CD4-positive, alpha-beta T cell (primary cell): ENCODE measurements at regions of chr16 and their contacts with region 1.

Region 1: GRCh38 chr16:2919511-2920255 is 8.0 kb downstream of the FLYWCH1 start:
- DNase-seq: peak; percentile 39 to 86 (median 54)
- ATAC-seq: peak; percentile 81
- H3K4me3 ChIP-seq: no peak overlapping the region
- H3K4me3 Mint-ChIP-seq: no peak overlapping the region
- H3K27ac ChIP-seq: no peak overlapping the region
- H3K27ac Mint-ChIP-seq: peak overlapping the region; percentile 16
- H3K4me1 ChIP-seq: peaks cover 3% of the 10 kb centered on the region
- H3K4me1 Mint-ChIP-seq: peaks cover 6% of the 10 kb centered on the region
- H3K27me3 ChIP-seq: no peaks in the 10 kb centered on the region
- H3K27me3 Mint-ChIP-seq: no peaks in the 10 kb centered on the region
- CTCF ChIP-seq: peak; percentile 95

Region 2: DNA sequence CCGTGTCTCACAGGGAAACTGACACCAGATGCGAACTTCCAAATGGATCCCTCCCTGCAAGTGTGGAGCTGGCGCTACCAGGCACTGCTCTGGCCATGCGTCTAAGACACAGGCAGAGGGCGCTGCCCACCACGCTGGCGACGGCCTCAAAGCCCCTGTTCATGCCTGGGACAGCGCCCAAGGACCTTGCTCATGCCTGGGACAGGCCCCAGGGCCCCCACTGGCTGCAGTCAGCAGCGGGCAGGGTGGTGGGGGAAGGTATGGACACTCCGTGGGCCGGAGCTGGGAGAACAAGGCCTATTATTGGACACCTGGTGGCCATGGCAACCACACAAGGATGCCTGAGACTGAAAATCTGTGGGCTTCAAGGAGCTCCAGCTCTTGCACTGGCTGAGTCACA is 80.8 kb before region 1 on chr16:
- CTCF ChIA-PET with region 1: interaction called, 3 read pairs
- POLR2A ChIA-PET with region 1: no interaction called
- intact Hi-C with region 1: loop called in 1 of 2 experiments (anchors 1 kb)
- DNase-seq: peak in 12 of 14 experiments; percentile 28 to 81 (median 52)
- ATAC-seq: peak; percentile 72
- H3K4me3 ChIP-seq: no peak overlapping the region
- H3K4me3 Mint-ChIP-seq: no peak overlapping the region
- H3K27ac ChIP-seq: no peak overlapping the region
- H3K27ac Mint-ChIP-seq: peak overlapping the region; percentile 33
- H3K4me1 ChIP-seq: peaks cover 46% of the 10 kb centered on the region
- H3K4me1 Mint-ChIP-seq: peaks cover 32% of the 10 kb centered on the region
- H3K27me3 ChIP-seq: no peaks in the 10 kb centered on the region
- H3K27me3 Mint-ChIP-seq: peaks cover 8% of the 10 kb centered on the region
- CTCF ChIP-seq: peak; percentile 51

Region 3: GRCh38 chr16:2874912-2875362 is 44.7 kb before region 1 on chr16:
- CTCF ChIA-PET with region 1: interaction called, 6 read pairs
- POLR2A ChIA-PET with region 1: no interaction called
- intact Hi-C with region 1: loop called (anchors 1 to 5 kb)
- DNase-seq: peak; percentile 40 to 90 (median 56)
- ATAC-seq: peak; percentile 100
- H3K4me3 ChIP-seq: no peak overlapping the region
- H3K4me3 Mint-ChIP-seq: no peak overlapping the region
- H3K27ac ChIP-seq: no peak overlapping the region
- H3K27ac Mint-ChIP-seq: no peak overlapping the region
- H3K4me1 ChIP-seq: peaks cover 9% of the 10 kb centered on the region
- H3K4me1 Mint-ChIP-seq: no peaks in the 10 kb centered on the region
- H3K27me3 ChIP-seq: no peaks in the 10 kb centered on the region
- H3K27me3 Mint-ChIP-seq: no peaks in the 10 kb centered on the region
- CTCF ChIP-seq: peak; percentile 95

Region 4: GRCh38 chr16:2883027-2883851 is 36.4 kb before region 1 on chr16 and contains the start of gene FLYWCH2:
- CTCF ChIA-PET with region 1: interaction called, 3 read pairs
- POLR2A ChIA-PET with region 1: interaction called, 4 read pairs
- intact Hi-C with region 1: loop called in 1 of 2 experiments (anchors 5 kb)
- DNase-seq: peak; percentile 98 to 100 (median 99)
- ATAC-seq: peak; percentile 77
- H3K4me3 ChIP-seq: peak within 1 kb of the TSS; percentile 75
- H3K4me3 Mint-ChIP-seq: peak within 1 kb of the TSS; percentile 93
- H3K27ac ChIP-seq: peak within 1 kb of the TSS; percentile 89 to 93
- H3K27ac Mint-ChIP-seq: peak within 1 kb of the TSS; percentile 99
- H3K4me1 ChIP-seq: peaks cover 16% of the 10 kb centered on the region
- H3K4me1 Mint-ChIP-seq: peaks cover 13% of the 10 kb centered on the region
- H3K27me3 ChIP-seq: no peaks in the 10 kb centered on the region
- H3K27me3 Mint-ChIP-seq: no peaks in the 10 kb centered on the region
- CTCF ChIP-seq: no peak
- total RNA-seq, gene FLYWCH2: 7.8 to 8.1 TPM

Region 5: DNA sequence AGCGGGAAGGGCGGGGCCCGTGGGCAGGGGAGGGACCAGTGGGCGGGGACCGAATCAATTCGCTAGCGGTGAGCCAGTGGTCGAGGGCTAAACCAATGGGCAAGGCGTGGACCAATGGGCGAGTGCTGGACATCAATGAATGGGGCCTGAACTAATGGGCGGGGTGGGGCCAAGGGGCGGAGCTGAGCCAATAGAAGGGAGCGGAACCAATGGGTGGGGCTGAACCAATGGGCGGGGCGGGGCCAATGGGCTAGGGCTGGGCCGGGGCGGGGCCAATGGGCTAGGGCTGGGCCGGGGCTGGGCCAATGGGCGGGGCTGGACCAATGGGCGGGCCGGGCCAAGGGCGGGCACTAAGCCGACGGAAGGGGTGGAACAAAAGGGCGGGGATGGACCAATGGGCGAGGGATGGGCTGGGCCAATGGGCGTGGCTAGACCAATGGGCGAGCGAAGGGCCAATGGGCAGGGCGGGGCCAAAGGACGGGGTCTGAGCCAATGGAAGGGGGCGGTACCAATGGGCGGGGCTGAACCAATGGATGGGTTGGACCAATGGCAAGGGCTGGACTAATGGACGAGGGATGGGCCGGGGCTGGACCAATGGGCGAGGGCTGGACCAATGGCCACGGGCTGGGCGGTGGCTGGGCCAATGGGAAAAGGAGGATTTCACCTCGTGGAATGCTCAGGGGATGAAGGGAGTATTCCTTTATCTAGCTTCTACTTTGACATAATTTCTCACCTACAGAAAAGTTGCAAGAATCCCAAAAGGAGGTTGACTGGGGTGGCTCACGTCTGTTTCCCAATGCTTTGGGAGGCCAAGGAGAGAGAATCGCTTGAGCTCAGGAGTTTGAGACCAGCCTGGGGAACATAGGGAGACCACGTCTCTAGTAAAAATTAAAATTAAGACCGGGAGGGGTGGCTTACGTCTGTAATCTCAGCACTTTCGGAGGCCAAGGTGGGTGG is 14.0 kb before region 1 on chr16:
- CTCF ChIA-PET with region 1: interaction called, 4 read pairs
- POLR2A ChIA-PET with region 1: interaction called, 3 read pairs
- intact Hi-C with region 1: loop called (anchors 1 kb)
- DNase-seq: peak; percentile 59 to 97 (median 83)
- ATAC-seq: peak; percentile 77
- H3K4me3 ChIP-seq: peak overlapping the region; percentile 94
- H3K4me3 Mint-ChIP-seq: peak overlapping the region; percentile 94
- H3K27ac ChIP-seq: peak overlapping the region in 1 of 2 donors; percentile 10
- H3K27ac Mint-ChIP-seq: no peak overlapping the region
- H3K4me1 ChIP-seq: peaks cover 32% of the 10 kb centered on the region
- H3K4me1 Mint-ChIP-seq: peaks cover 37% of the 10 kb centered on the region
- H3K27me3 ChIP-seq: no peaks in the 10 kb centered on the region
- H3K27me3 Mint-ChIP-seq: no peaks in the 10 kb centered on the region
- CTCF ChIP-seq: no peak